Endothelial cell of umbilical vein (primary cell): ENCODE measurements at regions of chr9 and their contacts with region 1.

Region 1: DNA sequence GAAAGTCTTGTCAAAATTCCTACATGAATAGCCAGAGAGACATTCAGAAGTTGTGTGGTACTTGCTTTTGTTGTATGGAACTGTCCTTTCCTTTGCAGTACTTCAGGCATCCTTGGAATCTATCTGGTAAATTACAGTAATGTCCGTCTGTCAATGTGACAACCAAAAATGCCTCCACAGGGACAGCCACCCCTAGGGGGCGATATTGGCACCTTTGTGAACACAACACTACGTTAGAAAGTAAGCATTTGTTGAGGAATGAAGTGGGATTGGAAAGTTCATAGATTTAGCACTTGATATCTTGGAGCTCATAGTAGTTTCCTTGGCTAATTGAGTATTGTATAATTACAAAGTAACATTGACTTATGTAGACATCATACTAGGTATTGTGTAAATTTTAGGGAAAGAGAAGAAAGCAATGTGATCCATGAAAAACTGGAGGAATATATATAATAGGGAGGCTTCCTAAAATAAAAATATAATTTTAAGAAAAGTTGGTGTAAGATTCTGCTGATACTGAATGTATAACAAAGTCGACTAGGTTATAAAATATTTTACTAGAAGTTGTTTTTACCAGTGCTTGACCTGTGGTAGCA is 32.7 kb downstream of the TMEFF1 start:
- DNase-seq: peak; percentile 61
- H3K4me3 ChIP-seq: no peak overlapping the region
- H3K27ac ChIP-seq: no peak overlapping the region
- H3K4me1 ChIP-seq: peaks cover 8% of the 10 kb centered on the region
- H3K27me3 ChIP-seq: no peaks in the 10 kb centered on the region
- CTCF ChIP-seq: peak; percentile 65 to 78
- POLR2A ChIP-seq: no peak

Region 2: GRCh38 chr9:100488171-100488570 is 17.5 kb before region 1 on chr9:
- CTCF ChIA-PET with region 1: no interaction called
- POLR2A ChIA-PET with region 1: no interaction called
- dilution Hi-C with region 1: no loop called
- intact Hi-C with region 1: no loop called
- DNase-seq: no peak
- H3K4me3 ChIP-seq: no peak overlapping the region
- H3K27ac ChIP-seq: no peak overlapping the region
- H3K4me1 ChIP-seq: no peaks in the 10 kb centered on the region
- H3K27me3 ChIP-seq: no peaks in the 10 kb centered on the region
- CTCF ChIP-seq: no peak
- POLR2A ChIP-seq: no peak

Region 3: GRCh38 chr9:100549048-100549447 is 43.4 kb after region 1 on chr9:
- CTCF ChIA-PET with region 1: no interaction called
- POLR2A ChIA-PET with region 1: no interaction called
- dilution Hi-C with region 1: no loop called
- intact Hi-C with region 1: loop called (anchors 2 kb)
- DNase-seq: peak; percentile 92
- H3K4me3 ChIP-seq: no peak overlapping the region
- H3K27ac ChIP-seq: peak overlapping the region; percentile 90
- H3K4me1 ChIP-seq: peaks cover 17% of the 10 kb centered on the region
- H3K27me3 ChIP-seq: no peaks in the 10 kb centered on the region
- CTCF ChIP-seq: no peak
- POLR2A ChIP-seq: peak; percentile 54